Activated T-helper 2 cell treated with anti-CD3 and anti-CD28 coated beads, Interferon-gamma antibody, Interleukin-2, Interleukin-4, amounts not matched to agents 10 μg/mL and 5 μg/mL and 100 μg/mL, durations not matched to agents 14 hours and 24 hours and 36 hours (primary cell): ENCODE measurements at regions of chr12 and their contacts with region 1.

Region 1: DNA sequence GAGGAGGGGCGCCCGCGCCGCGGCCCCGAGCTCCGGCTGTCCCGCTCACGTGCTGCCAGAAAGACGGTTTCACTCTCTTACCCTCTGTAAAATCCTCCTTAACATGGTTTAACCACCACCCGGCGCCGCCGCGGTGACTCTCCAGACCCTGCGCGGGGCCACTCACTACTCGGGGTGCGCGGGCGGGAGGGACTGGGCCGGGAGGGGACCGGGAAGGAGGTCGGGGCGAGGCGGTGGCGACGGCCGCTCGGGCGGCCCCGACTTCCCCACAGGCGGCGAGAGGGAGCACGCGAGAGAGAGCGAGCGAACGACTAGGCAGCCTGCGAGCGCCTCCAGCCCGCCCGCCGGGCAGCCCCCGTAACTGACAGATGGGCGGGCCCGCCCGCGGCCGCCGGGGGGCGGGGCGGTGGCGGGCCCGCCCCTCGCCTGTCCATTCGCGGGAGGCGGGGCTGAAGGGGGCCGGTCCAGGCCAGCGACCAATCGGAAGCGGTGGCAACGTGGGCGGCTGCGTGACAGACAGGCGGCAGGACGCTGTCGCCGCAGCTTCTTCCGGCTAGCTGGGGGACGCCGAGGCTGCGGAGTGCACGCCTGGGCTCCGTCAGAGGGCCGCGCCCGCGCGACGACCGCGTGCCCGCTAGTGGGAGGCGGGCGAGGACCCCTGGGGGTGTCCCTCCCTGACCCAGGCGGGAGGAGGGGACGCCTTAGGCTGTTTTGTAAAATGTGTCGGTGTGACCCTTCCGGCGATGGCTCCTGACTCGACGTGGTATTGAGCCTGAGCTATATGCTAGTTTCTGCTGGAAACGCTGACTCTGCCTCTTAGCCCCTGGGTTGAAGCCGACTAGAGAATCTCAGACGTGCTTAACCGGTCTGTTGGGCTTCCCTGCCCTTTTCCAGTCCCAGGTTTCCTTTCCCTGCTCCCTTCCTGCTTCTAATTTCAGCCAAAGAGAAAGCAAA is at the start of gene EEA1:
- DNase-seq: peak; percentile 93
- H3K4me3 Mint-ChIP-seq: peak within 1 kb of the TSS; percentile 88
- H3K27ac Mint-ChIP-seq: peak within 1 kb of the TSS; percentile 95
- H3K4me1 Mint-ChIP-seq: peaks cover 27% of the 10 kb centered on the region
- H3K27me3 Mint-ChIP-seq: peaks cover 2% of the 10 kb centered on the region
- total RNA-seq, gene EEA1: 30.5 and 31.9 TPM in 2 replicates

Region 2: DNA sequence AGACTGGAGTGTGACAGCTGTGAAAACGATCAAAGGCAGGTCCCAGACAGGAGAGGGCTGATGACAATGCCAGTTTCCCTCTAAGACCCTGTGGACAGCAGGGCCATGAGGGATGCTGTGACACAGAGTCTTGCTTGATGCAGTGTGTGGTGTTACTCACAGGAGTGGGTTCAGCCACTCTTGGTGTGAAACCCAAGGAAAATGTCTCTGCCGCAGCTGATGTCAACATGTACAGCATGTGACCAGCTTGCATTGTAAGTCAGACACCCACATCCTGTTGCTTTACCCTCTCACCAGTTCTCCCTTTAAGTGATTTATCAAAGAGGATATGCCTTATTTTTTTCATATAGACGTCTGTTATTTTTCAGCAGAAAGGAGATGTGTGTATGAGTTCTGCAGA is 1052.2 kb before region 1 on chr12:
- intact Hi-C with region 1: loop called (anchors 5 kb)
- DNase-seq: peak; percentile 75
- H3K4me3 Mint-ChIP-seq: peak overlapping the region; percentile 54
- H3K27ac Mint-ChIP-seq: peak overlapping the region; percentile 94
- H3K4me1 Mint-ChIP-seq: peaks cover 48% of the 10 kb centered on the region
- H3K27me3 Mint-ChIP-seq: no peaks in the 10 kb centered on the region

Region 3: GRCh38 chr12:92827836-92828431 is 101.3 kb before region 1 on chr12:
- intact Hi-C with region 1: loop called (anchors 10 kb)
- DNase-seq: no peak
- H3K4me3 Mint-ChIP-seq: no peak overlapping the region
- H3K27ac Mint-ChIP-seq: no peak overlapping the region
- H3K4me1 Mint-ChIP-seq: no peaks in the 10 kb centered on the region
- H3K27me3 Mint-ChIP-seq: no peaks in the 10 kb centered on the region

Region 4: DNA sequence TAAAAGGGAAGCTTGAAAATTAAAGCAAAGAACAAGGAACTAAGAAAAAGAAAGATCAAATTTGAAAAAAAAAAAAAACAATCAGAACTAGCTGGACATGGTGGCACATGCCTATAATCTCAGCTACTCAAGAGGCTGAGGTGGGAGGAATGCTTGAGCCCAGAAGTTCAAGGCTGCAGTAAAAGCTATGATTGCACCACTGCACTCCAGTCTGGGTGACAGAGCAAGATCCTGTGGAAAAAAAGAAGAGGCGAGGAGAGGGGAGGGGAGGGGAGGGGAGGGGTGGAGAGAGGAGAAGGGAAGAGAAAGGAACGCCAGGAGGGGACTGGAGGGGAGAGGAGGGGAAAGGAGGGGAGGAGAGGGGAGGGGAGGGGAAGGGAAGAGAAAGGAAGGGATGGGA is 43.1 kb before region 1 on chr12:
- intact Hi-C with region 1: no loop called
- DNase-seq: no peak
- H3K4me3 Mint-ChIP-seq: no peak overlapping the region
- H3K27ac Mint-ChIP-seq: no peak overlapping the region
- H3K4me1 Mint-ChIP-seq: peaks cover 15% of the 10 kb centered on the region
- H3K27me3 Mint-ChIP-seq: no peaks in the 10 kb centered on the region

Region 5: GRCh38 chr12:93089805-93090569 is 160.7 kb after region 1 on chr12:
- intact Hi-C with region 1: loop called (anchors 5 kb)
- DNase-seq: no peak
- H3K4me3 Mint-ChIP-seq: no peak overlapping the region
- H3K27ac Mint-ChIP-seq: peak overlapping the region; percentile 67
- H3K4me1 Mint-ChIP-seq: peaks cover 15% of the 10 kb centered on the region
- H3K27me3 Mint-ChIP-seq: no peaks in the 10 kb centered on the region

Region 6: GRCh38 chr12:93419388-93420034 is 490.3 kb after region 1 on chr12:
- intact Hi-C with region 1: loop called (anchors 5 kb)
- DNase-seq: no peak
- H3K4me3 Mint-ChIP-seq: no peak overlapping the region
- H3K27ac Mint-ChIP-seq: no peak overlapping the region
- H3K4me1 Mint-ChIP-seq: peaks cover 69% of the 10 kb centered on the region
- H3K27me3 Mint-ChIP-seq: no peaks in the 10 kb centered on the region

Region 7: GRCh38 chr12:93677195-93678064 is 748.2 kb after region 1 on chr12 and contains the start of gene CRADD:
- intact Hi-C with region 1: loop called (anchors 5 kb)
- DNase-seq: peak; percentile 85
- H3K4me3 Mint-ChIP-seq: peak within 1 kb of the TSS; percentile 94
- H3K27ac Mint-ChIP-seq: peak within 1 kb of the TSS; percentile 99
- H3K4me1 Mint-ChIP-seq: peaks cover 30% of the 10 kb centered on the region
- H3K27me3 Mint-ChIP-seq: peaks cover 9% of the 10 kb centered on the region
- total RNA-seq, gene CRADD: 10.2 and 10.7 TPM in 2 replicates

Region 8: GRCh38 chr12:94109160-94109559 is 1179.9 kb after region 1 on chr12:
- intact Hi-C with region 1: loop called (anchors 5 kb)
- DNase-seq: peak; percentile 19
- H3K4me3 Mint-ChIP-seq: no peak overlapping the region
- H3K27ac Mint-ChIP-seq: peak overlapping the region; percentile 78
- H3K4me1 Mint-ChIP-seq: peaks cover 22% of the 10 kb centered on the region
- H3K27me3 Mint-ChIP-seq: no peaks in the 10 kb centered on the region